ENCODE measurements at regions of chr11 and their contacts with region 1.

Region 1: DNA sequence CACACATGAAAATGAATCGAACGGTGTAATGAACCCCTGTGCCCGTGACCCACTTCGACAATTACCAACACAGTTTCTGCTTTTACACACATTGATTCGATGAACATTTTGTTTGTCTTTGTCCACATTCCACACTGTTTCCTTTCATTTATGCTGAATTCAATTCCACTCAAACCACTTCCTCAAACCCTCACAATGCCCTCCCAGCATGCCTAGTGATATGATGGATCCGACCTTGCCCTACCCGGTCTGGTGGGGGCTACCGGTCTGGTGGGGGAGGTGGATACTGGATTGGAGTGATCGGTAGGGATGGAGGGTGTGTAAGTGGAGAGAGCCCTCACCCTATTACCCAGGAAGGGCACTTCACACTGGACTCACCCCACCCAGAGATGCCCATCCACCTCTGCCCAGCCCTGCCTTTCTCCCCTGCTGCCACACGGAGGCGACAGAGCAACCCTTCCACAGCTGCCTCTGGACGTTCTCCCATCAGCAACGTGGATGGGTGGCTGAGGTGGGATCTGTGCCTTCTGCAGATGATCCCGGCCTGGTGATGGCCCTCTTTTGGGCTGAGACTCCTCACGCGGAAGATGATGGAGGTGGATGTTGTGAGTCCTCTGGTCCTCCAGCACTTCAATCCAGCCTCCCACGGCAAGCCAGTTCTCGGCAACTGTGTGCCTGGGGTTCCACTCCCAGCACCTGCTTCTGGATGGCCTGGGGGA is 33.0 kb upstream of the P2RY2 start:
- DNase-seq: peak; percentile 77
- ATAC-seq: peak; percentile 40
- H3K4me3 ChIP-seq: peak overlapping the region; percentile 1 to 37 (median 23)
- H3K4me3 Mint-ChIP-seq: peak overlapping the region; percentile 76
- H3K27ac ChIP-seq: no peak overlapping the region
- H3K27ac Mint-ChIP-seq: peak overlapping the region; percentile 46
- H3K4me1 ChIP-seq: peaks cover 22 to 43% of the 10 kb centered on the region in 2 donors
- H3K4me1 Mint-ChIP-seq: peaks cover 35% of the 10 kb centered on the region
- H3K27me3 ChIP-seq: no peaks in the 10 kb centered on the region
- H3K27me3 Mint-ChIP-seq: no peaks in the 10 kb centered on the region
- CTCF ChIP-seq: peak; percentile 88

Region 2: DNA sequence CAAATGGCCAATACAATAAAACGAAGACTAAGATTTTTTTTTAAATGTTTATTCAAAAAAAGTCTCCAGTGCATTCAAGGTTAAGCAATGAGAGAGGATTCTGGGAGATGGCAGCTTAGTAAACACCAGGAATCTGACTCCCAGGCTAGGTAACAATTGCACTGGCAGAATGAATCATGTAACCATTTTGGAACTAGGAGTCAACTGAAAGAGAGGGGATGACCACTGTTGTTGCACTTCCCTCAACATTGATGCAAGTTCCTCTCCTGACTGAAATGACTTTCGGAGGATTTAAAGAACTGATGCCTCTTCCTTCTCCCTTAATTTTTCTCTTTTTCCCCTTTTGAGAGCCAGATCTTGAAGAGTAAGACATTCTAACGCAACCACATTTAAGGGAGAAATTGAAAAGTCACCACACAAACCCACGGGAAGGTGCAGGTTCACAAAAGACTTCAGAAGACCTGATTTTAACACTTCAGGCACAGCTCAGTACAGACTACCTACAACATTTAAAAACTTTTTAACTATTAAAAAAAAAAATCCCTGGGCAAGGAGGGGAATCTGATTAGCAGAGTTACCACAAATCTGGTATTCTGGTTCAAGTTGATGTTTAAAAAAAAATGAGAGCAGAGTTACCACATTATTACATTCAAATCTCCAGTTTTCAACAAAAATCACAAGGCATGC is 99.8 kb before region 1 on chr11:
- CTCF ChIA-PET with region 1: no interaction called
- POLR2A ChIA-PET with region 1: interaction called, 13 read pairs
- intact Hi-C with region 1: no loop called
- DNase-seq: peak; percentile 37
- ATAC-seq: peak; percentile 25
- H3K4me3 ChIP-seq: no peak overlapping the region
- H3K4me3 Mint-ChIP-seq: peak overlapping the region; percentile 44
- H3K27ac ChIP-seq: peak overlapping the region; percentile 42 to 79
- H3K27ac Mint-ChIP-seq: peak overlapping the region; percentile 70
- H3K4me1 ChIP-seq: peaks cover 24 to 38% of the 10 kb centered on the region in 2 donors
- H3K4me1 Mint-ChIP-seq: peaks cover 46% of the 10 kb centered on the region
- H3K27me3 ChIP-seq: no peaks in the 10 kb centered on the region
- H3K27me3 Mint-ChIP-seq: no peaks in the 10 kb centered on the region
- CTCF ChIP-seq: no peak

Region 3: GRCh38 chr11:73106347-73106746 is 78.8 kb before region 1 on chr11:
- CTCF ChIA-PET with region 1: no interaction called
- POLR2A ChIA-PET with region 1: no interaction called
- intact Hi-C with region 1: no loop called
- DNase-seq: peak; percentile 34
- ATAC-seq: peak; percentile 47
- H3K4me3 ChIP-seq: no peak overlapping the region
- H3K4me3 Mint-ChIP-seq: no peak overlapping the region
- H3K27ac ChIP-seq: peak overlapping the region in 1 of 2 donors; percentile 72
- H3K27ac Mint-ChIP-seq: peak overlapping the region; percentile 50
- H3K4me1 ChIP-seq: peaks cover 20 to 33% of the 10 kb centered on the region in 2 donors
- H3K4me1 Mint-ChIP-seq: peaks cover 73% of the 10 kb centered on the region
- H3K27me3 ChIP-seq: no peaks in the 10 kb centered on the region
- H3K27me3 Mint-ChIP-seq: no peaks in the 10 kb centered on the region
- CTCF ChIP-seq: no peak

Region 4: DNA sequence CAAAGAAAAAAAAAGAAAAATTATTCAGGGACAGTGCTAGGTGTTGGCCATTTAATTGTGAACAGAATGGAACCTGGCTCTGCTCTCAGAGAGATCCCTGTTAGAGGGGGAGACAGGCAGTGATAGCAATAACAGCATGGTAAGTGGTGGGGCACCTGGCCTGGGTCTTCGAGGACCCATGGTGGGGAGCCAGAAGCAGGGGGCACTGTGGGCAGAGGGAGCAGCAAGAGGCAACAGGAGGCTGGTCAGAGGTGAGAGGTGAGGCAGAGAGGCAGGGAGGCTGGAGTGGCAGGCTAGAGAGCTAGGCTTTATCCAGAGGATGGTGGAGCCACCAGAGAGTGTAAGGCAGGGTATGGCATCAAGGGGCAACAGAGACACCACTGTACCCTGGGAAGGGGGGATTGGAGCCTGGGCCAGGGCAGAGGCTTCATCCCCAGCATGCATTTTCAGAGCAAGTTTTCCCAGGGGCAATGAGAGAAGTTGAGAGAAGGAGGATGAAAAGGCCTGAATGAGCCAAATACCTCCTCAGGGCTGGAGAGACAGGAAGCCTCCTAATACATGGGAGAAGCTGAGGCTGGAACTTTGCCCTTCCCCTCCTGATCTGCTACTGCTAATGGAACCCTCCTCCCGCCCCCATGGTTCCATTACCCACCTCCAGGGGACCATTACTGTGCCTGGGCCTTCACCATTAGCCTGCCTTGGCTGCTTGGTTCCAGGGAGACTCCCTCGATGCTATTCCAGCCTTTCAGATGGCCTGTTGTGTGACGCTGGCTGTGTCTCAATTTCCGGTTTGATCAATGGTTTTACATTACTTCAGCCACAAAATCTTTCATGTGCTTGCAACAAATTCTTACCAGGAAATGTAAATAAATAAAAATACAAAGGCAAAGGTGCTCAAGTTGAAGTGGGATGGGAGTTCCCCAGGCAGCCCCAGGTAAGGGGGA is 30.4 kb after region 1 on chr11:
- CTCF ChIA-PET with region 1: interaction called, 7 read pairs
- POLR2A ChIA-PET with region 1: no interaction called
- intact Hi-C with region 1: loop called (anchors 2 kb)
- DNase-seq: no peak
- ATAC-seq: no peak
- H3K4me3 ChIP-seq: no peak overlapping the region
- H3K4me3 Mint-ChIP-seq: no peak overlapping the region
- H3K27ac ChIP-seq: no peak overlapping the region
- H3K27ac Mint-ChIP-seq: peak overlapping the region; percentile 54
- H3K4me1 ChIP-seq: peaks cover 23 to 25% of the 10 kb centered on the region in 2 donors
- H3K4me1 Mint-ChIP-seq: peaks cover 24% of the 10 kb centered on the region
- H3K27me3 ChIP-seq: peaks cover 0 to 31% (median 9%) of the 10 kb centered on the region in 4 experiments
- H3K27me3 Mint-ChIP-seq: peaks cover 21% of the 10 kb centered on the region
- CTCF ChIP-seq: no peak

Region 5: DNA sequence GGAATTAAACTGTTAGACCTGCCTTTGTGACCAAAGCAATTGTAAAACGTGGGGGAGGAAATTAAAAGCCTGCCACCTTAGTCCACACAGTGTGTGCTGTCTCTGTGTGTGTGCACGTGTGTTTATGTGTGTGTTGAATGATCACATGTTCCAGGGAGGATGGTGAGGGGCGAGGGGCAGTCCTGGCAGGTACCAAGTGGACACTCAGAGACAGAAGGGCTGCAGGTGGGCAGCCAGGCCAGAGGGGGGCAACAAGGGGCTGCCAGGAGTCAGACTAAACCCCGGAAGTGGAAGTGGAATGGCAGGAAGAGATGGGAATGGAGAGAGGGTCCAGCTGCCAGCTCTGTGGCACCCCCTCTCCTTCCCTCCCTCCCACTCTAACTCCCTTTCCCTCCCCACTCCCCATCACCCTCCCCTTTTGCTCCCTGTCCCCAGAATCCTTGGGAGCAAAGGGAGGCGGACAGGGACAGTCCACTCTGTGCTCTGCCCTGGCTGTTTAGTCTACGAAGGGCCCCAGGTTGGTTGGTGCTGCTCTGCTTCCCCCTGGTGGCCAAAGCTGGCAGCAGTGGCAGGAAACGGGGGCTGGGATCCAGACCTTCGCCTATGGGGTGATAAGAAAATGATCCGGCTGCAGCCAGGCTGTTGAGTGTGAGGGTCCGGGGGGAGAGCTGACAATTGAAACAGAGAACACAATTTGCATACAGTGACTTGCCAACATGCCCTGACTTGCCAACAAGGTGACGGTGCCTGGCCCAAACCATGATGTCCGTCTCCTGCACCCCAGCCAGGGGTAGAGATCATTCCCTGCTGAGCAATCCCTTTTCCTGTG is 57.4 kb after region 1 on chr11:
- CTCF ChIA-PET with region 1: interaction called, 281 read pairs
- POLR2A ChIA-PET with region 1: interaction called, 6 read pairs
- intact Hi-C with region 1: loop called (anchors 1 kb)
- DNase-seq: peak; percentile 81
- ATAC-seq: peak; percentile 89
- H3K4me3 ChIP-seq: no peak overlapping the region
- H3K4me3 Mint-ChIP-seq: no peak overlapping the region
- H3K27ac ChIP-seq: no peak overlapping the region
- H3K27ac Mint-ChIP-seq: no peak overlapping the region
- H3K4me1 ChIP-seq: peaks cover 4 to 7% of the 10 kb centered on the region in 2 donors
- H3K4me1 Mint-ChIP-seq: peaks cover 6% of the 10 kb centered on the region
- H3K27me3 ChIP-seq: peaks cover 0 to 2% (median 0%) of the 10 kb centered on the region in 4 experiments
- H3K27me3 Mint-ChIP-seq: peaks cover 3% of the 10 kb centered on the region
- CTCF ChIP-seq: peak; percentile 79